ENCODE measurements at regions of chr13 and their contacts with region 1.

Region 1: DNA sequence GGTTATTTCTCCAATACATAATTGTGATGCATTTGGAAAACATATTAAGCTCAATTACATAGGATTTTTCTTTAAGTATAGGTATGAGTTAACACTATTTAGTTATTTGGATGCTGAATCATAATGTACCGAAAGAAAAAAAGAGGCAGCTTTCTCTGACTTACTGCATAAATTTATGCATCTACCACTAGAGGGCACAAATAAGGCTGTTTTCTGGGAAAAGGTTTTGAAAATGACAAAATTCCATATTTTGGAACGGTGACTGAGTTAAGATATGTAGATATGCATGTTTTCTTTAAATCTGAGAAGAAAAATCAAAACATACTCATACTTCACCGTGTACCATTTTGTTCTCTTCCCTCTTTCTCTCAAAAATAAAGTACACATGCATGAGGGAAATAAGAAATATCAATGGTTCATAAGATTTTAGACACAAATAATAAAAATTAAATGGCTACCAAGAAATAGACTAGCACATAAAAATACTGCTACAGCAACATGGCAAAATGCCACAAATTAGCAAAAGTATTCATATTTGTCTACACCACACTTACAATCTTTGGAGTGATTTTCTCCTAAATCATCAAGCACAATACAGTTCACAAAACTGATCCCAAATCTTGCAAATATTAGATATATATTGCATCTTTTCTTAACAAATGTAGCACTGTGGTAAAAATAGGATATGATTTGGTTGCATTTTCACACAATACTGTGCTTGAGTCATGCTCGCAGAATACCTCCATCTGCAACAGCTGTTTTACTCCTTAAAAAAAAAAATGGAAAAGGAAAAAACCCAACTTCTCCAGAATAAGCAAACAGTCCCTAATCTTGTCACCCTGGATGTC is 260.0 kb downstream of the FGF14 start:
- DNase-seq: no peak
- ATAC-seq: no peak
- H3K4me3 ChIP-seq: no peak overlapping the region
- H3K4me3 Mint-ChIP-seq: no peak overlapping the region
- H3K27ac ChIP-seq: no peak overlapping the region
- H3K27ac Mint-ChIP-seq: no peak overlapping the region
- H3K4me1 ChIP-seq: no peaks in the 10 kb centered on the region
- H3K4me1 Mint-ChIP-seq: no peaks in the 10 kb centered on the region
- H3K27me3 ChIP-seq: no peaks in the 10 kb centered on the region
- H3K27me3 Mint-ChIP-seq: no peaks in the 10 kb centered on the region
- CTCF ChIP-seq: peak; percentile 39

Region 2: GRCh38 chr13:102555917-102556553 is 414.2 kb after region 1 on chr13:
- CTCF ChIA-PET with region 1: interaction called, 6 read pairs
- POLR2A ChIA-PET with region 1: no interaction called
- intact Hi-C with region 1: loop called (anchors 5 kb)
- DNase-seq: peak; percentile 27
- ATAC-seq: no peak
- H3K4me3 ChIP-seq: no peak overlapping the region
- H3K4me3 Mint-ChIP-seq: no peak overlapping the region
- H3K27ac ChIP-seq: no peak overlapping the region
- H3K27ac Mint-ChIP-seq: no peak overlapping the region
- H3K4me1 ChIP-seq: no peaks in the 10 kb centered on the region
- H3K4me1 Mint-ChIP-seq: no peaks in the 10 kb centered on the region
- H3K27me3 ChIP-seq: peaks cover 0 to 3% (median 0%) of the 10 kb centered on the region in 4 experiments
- H3K27me3 Mint-ChIP-seq: peaks cover 10% of the 10 kb centered on the region
- CTCF ChIP-seq: peak; percentile 51